Breast epithelium (tissue), 4 donors: ENCODE measurements at regions of chr1 and their contacts with region 1.

Region 1: DNA sequence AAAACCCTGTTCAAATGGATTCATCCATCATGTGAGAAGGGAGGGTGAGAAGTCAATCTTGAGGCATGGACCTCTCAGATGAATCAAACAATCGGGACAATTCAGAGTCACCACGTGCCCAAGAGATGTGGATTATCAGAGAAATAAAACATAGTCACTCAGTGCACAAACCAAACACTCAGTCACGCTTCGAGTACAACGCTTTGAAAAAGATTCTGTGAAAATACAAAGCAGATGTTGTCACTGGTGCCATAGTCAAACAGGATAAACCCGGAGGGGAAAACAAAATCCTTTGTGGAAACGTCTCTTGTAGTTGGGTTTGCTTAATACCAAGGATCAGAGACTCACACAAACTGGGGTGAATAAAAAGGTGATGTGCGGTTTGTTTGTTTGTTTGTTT is 188.4 kb downstream of the RRAGC start:
- DNase-seq: no peak
- H3K4me3 ChIP-seq: no peak overlapping the region
- H3K27ac ChIP-seq: no peak overlapping the region
- H3K4me1 ChIP-seq: no peaks in the 10 kb centered on the region
- H3K27me3 ChIP-seq: no peaks in the 10 kb centered on the region
- CTCF ChIP-seq: no peak
- POLR2A ChIP-seq: no peak

Region 2: DNA sequence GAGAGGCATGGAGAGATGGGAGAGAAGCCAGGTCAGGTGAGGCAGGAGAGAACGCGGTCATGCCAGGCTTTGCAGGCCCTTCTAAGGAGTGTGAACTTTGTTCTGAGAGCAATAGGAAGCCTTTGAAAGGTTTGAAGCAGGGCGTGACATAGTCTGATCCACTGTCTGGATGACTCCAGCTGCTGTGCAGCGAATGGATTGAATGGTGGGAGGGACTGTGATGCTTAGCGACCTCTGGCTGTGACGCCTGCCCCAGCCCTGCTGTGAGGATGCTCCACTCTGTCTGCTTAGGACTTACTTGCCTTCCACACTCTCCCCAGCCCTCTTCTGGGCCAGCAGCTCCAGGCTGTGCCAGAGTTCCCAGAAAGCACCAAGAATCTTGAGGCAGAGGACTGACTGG is 582.9 kb before region 1 on chr1:
- intact Hi-C with region 1: loop called (anchors 5 kb)
- DNase-seq: no peak
- H3K4me3 ChIP-seq: no peak overlapping the region
- H3K27ac ChIP-seq: no peak overlapping the region
- H3K4me1 ChIP-seq: no peaks in the 10 kb centered on the region
- H3K27me3 ChIP-seq: no peaks in the 10 kb centered on the region
- CTCF ChIP-seq: no peak
- POLR2A ChIP-seq: no peak

Region 3: GRCh38 chr1:38715415-38715814 is 44.2 kb after region 1 on chr1:
- intact Hi-C with region 1: no loop called
- DNase-seq: no peak
- H3K4me3 ChIP-seq: no peak overlapping the region
- H3K27ac ChIP-seq: no peak overlapping the region
- H3K4me1 ChIP-seq: no peaks in the 10 kb centered on the region
- H3K27me3 ChIP-seq: no peaks in the 10 kb centered on the region
- CTCF ChIP-seq: no peak
- POLR2A ChIP-seq: no peak

Region 4: GRCh38 chr1:38800720-38801671 is 129.8 kb after region 1 on chr1:
- intact Hi-C with region 1: no loop called
- DNase-seq: no peak
- H3K4me3 ChIP-seq: no peak overlapping the region
- H3K27ac ChIP-seq: no peak overlapping the region
- H3K4me1 ChIP-seq: no peaks in the 10 kb centered on the region
- H3K27me3 ChIP-seq: peaks cover 0 to 41% of the 10 kb centered on the region in 2 donors
- CTCF ChIP-seq: no peak
- POLR2A ChIP-seq: no peak

Region 5: DNA sequence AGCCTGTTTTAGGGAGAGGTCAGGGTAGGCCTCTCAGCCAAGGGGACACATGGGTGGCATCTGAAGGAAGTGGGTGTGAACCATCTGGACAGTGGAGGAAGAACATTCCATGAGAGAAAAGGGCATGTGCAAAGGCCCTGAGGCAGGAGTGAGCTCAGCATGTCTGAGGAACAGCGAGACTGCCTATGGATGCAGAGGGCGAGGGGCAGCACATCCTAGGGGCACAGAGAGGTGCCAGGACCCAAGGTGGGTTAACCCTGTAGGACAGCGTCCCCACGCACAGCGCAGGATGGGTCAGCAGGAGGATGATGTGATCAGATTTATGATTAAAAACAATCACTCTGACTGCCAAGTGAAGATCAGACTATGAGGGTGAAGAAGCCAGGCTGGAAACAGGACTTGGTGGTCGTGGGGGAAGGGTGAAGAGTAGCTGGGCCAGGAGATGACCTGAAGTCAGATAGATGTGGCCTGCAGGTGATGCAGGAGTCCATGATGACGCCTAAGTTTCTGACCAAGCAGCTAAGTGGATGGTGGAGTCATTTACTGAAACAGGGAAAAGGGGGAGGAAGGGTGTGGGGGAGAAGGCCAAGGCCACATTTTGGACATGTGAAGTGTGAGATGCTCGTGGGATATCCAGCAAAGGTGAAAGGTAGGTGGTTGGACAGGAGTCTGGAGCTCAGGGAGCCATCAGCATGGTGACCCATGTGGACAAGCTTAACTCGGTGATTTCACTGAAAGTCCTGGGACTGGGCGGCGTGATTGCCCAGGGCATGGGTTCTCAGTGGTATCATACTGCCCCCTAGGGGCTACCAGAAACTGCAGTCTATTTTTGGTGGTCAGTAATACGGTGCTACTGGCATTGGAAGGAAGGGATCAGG is 867.6 kb after region 1 on chr1:
- intact Hi-C with region 1: no loop called
- DNase-seq: peak in 1 of 2 donors; percentile 34
- H3K4me3 ChIP-seq: no peak overlapping the region
- H3K27ac ChIP-seq: no peak overlapping the region
- H3K4me1 ChIP-seq: no peaks in the 10 kb centered on the region
- H3K27me3 ChIP-seq: no peaks in the 10 kb centered on the region
- CTCF ChIP-seq: peak; percentile 59 to 71 (median 70)
- POLR2A ChIP-seq: no peak